Naive thymus-derived CD4-positive, alpha-beta T cell (primary cell): ENCODE measurements at regions of chr7 and their contacts with region 1.

Region 1: GRCh38 chr7:134140889-134141867 is 14.0 kb downstream of the LRGUK start:
- DNase-seq: peak in 7 of 9 donors; percentile 12 to 44 (median 36)
- ATAC-seq: peak; percentile 84
- H3K4me3 ChIP-seq: no peak overlapping the region
- H3K4me3 Mint-ChIP-seq: peak overlapping the region in 4 of 10 donors; percentile 17 to 32 (median 28)
- H3K27ac ChIP-seq: no peak overlapping the region
- H3K27ac Mint-ChIP-seq: no peak overlapping the region
- H3K4me1 ChIP-seq: no peaks in the 10 kb centered on the region
- H3K4me1 Mint-ChIP-seq: peaks cover 0 to 3% (median 0%) of the 10 kb centered on the region in 7 donors
- H3K27me3 ChIP-seq: no peaks in the 10 kb centered on the region
- H3K27me3 Mint-ChIP-seq: peaks cover 0 to 3% (median 0%) of the 10 kb centered on the region in 5 donors

Region 2: GRCh38 chr7:134327896-134328295 is 186.7 kb after region 1 on chr7:
- CTCF ChIA-PET with region 1: no interaction called
- POLR2A ChIA-PET with region 1: no interaction called
- intact Hi-C with region 1: loop called (anchors 1 to 5 kb)
- DNase-seq: peak in 8 of 9 donors; percentile 23 to 57 (median 46)
- ATAC-seq: peak; percentile 86
- H3K4me3 ChIP-seq: no peak overlapping the region
- H3K4me3 Mint-ChIP-seq: no peak overlapping the region
- H3K27ac ChIP-seq: no peak overlapping the region
- H3K27ac Mint-ChIP-seq: peak overlapping the region in 1 of 9 donors; percentile 22
- H3K4me1 ChIP-seq: no peaks in the 10 kb centered on the region
- H3K4me1 Mint-ChIP-seq: peaks cover 0 to 8% (median 0%) of the 10 kb centered on the region in 7 donors
- H3K27me3 ChIP-seq: no peaks in the 10 kb centered on the region
- H3K27me3 Mint-ChIP-seq: peaks cover 0 to 20% (median 12%) of the 10 kb centered on the region in 5 donors

Region 3: GRCh38 chr7:134355927-134356326 is 214.7 kb after region 1 on chr7:
- CTCF ChIA-PET with region 1: no interaction called
- POLR2A ChIA-PET with region 1: no interaction called
- intact Hi-C with region 1: loop called in 1 of 2 experiments (anchors 1 kb)
- DNase-seq: no peak
- ATAC-seq: no peak
- H3K4me3 ChIP-seq: no peak overlapping the region
- H3K4me3 Mint-ChIP-seq: no peak overlapping the region
- H3K27ac ChIP-seq: no peak overlapping the region
- H3K27ac Mint-ChIP-seq: no peak overlapping the region
- H3K4me1 ChIP-seq: no peaks in the 10 kb centered on the region
- H3K4me1 Mint-ChIP-seq: peaks cover 0 to 4% (median 0%) of the 10 kb centered on the region in 7 donors
- H3K27me3 ChIP-seq: no peaks in the 10 kb centered on the region
- H3K27me3 Mint-ChIP-seq: peaks cover 0 to 6% (median 5%) of the 10 kb centered on the region in 5 donors

Region 4: DNA sequence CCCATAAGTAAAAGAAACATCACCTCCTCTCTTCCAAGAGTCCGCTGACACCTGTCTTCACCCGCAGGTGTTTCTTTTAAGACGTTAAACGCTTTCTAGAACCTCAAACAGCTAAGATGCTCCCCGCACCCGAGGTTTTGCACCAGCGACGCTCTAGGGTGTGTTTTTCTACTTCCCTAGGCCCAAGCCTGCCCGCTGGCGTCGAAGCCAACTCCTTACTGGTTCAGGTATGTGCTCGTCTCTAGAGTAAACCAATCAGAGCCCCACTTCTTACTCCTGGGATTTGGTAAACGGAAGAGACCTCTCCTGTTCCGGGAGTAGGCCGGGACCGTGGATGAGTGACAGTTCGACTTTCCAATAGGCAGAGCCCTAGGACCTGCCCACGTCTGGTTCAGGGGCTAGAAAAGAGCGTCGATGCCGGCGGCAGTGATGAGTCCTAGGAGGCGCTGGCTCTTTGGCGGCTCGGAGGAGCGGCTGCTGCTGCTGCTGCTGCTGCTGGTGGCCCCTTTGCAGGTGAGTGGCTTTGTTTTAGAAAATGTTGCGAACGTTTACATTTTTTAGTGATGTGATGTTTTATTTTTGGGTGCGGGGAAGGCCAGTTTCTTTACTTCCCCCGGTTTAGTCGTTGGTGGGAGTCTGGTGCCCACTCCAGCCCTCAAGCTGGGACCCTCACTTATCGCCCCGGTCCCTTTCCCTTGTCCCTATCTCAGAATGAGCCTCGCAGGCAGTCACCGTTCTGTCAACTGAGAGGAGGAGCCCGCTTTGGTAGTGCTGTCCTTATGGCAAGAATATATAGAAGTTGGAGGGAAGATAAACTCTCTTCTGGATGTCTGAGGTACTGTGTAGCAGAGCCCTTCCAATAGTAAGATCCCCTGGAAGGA is 505.5 kb after region 1 on chr7 and contains the start of gene BPGM:
- CTCF ChIA-PET with region 1: no interaction called
- POLR2A ChIA-PET with region 1: no interaction called
- intact Hi-C with region 1: no loop called
- DNase-seq: peak; percentile 81 to 100 (median 98)
- ATAC-seq: peak; percentile 97
- H3K4me3 ChIP-seq: peak within 1 kb of the TSS; percentile 88
- H3K4me3 Mint-ChIP-seq: no peak within 1 kb of the TSS
- H3K27ac ChIP-seq: peak within 1 kb of the TSS; percentile 85
- H3K27ac Mint-ChIP-seq: no peak within 1 kb of the TSS
- H3K4me1 ChIP-seq: peaks cover 19 to 35% of the 10 kb centered on the region in 2 donors
- H3K4me1 Mint-ChIP-seq: peaks cover 21 to 45% (median 38%) of the 10 kb centered on the region in 7 donors
- H3K27me3 ChIP-seq: no peaks in the 10 kb centered on the region
- H3K27me3 Mint-ChIP-seq: no peaks in the 10 kb centered on the region
- total RNA-seq, gene BPGM: 12.7 to 19.2 (median 14.2) TPM